ENCODE measurements at regions of chr14 and their contacts with region 1.

Region 1: GRCh38 chr14:75487155-75487671 is 35.1 kb upstream of the BATF start:
- DNase-seq: no peak
- ATAC-seq: no peak
- H3K4me3 ChIP-seq: no peak overlapping the region
- H3K27ac ChIP-seq: no peak overlapping the region
- H3K4me1 ChIP-seq: peaks cover 5 to 12% of the 10 kb centered on the region in 2 experiments; a peak in 3 of 5 replicates
- H3K27me3 ChIP-seq: no peaks in the 10 kb centered on the region
- CTCF ChIP-seq: no peak
- EP300 ChIP-seq: no peak
- POLR2A ChIP-seq: no peak
- RAD21 ChIP-seq: no peak

Region 2: DNA sequence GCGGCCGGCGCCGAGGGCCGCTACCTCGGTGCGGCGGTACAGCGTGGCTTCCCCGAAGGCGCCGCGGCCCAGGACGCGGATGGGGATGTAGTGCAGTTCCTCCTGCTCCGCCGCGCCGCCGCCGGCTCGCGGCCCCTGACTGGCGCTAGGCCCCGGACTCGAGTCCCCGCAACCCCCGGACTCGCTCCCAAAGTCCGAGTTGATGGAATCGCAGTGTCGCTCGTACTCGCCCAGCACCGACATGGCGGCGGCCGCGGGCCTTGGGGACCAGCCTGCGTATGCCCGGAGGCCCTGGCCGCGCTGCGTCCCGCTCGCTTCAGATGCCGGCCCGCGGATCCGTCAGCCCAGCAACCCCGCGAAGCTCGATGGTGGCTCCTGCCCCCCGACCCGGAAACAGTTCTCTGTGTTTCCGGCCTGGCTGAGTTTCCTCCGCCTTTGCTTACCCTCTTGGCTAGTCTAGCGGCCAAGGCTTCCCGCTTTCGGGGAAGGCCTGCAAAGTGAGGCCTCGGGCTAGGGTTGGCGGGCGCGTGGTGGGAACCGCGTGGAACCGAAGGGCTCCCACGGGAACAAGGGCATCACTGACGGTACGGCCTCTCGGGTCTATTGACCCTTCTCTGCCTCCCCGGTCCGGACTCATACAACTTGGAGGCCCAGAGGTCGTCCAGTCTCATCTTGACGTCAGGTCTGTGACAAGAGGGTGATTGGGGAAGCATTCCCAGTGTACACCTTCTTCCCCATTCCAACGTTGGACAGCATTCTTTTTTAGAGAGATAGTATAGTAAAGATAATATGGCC is 360.3 kb before region 1 on chr14 and contains the start of gene NEK9:
- CTCF ChIA-PET with region 1: interaction called, 3 read pairs
- POLR2A ChIA-PET with region 1: no interaction called
- in situ Hi-C with region 1: no loop called
- intact Hi-C with region 1: loop called (anchors 5 kb)
- DNase-seq: peak; percentile 68 to 88 (median 78)
- ATAC-seq: peak; percentile 94
- H3K4me3 ChIP-seq: peak within 1 kb of the TSS; percentile 73
- H3K27ac ChIP-seq: peak within 1 kb of the TSS; percentile 98
- H3K4me1 ChIP-seq: peaks cover 11 to 14% of the 10 kb centered on the region in 2 experiments
- H3K27me3 ChIP-seq: no peaks in the 10 kb centered on the region
- CTCF ChIP-seq: no peak
- EP300 ChIP-seq: no peak
- POLR2A ChIP-seq: peak; percentile 91
- RAD21 ChIP-seq: no peak
- polyA plus RNA-seq, gene NEK9: 2.8 to 5.5 TPM

Region 3: GRCh38 chr14:75147423-75148071 is 339.7 kb before region 1 on chr14:
- CTCF ChIA-PET with region 1: no interaction called
- POLR2A ChIA-PET with region 1: no interaction called
- in situ Hi-C with region 1: loop called (anchors 10 kb)
- intact Hi-C with region 1: no loop called
- DNase-seq: no peak
- ATAC-seq: peak; percentile 57; the same call in 2 of the 3 replicates
- H3K4me3 ChIP-seq: no peak overlapping the region
- H3K27ac ChIP-seq: no peak overlapping the region
- H3K4me1 ChIP-seq: no peaks in the 10 kb centered on the region
- H3K27me3 ChIP-seq: no peaks in the 10 kb centered on the region
- CTCF ChIP-seq: no peak
- EP300 ChIP-seq: no peak
- POLR2A ChIP-seq: no peak
- RAD21 ChIP-seq: 0 out of 4 replicates have a peak, but pooled peaks of 1 of the 2 experiments have one; percentile 11

Region 4: GRCh38 chr14:75560962-75561432 is 73.8 kb after region 1 on chr14:
- CTCF ChIA-PET with region 1: interaction called, 6 read pairs
- POLR2A ChIA-PET with region 1: no interaction called
- in situ Hi-C with region 1: no loop called
- intact Hi-C with region 1: loop called (anchors 1 kb)
- DNase-seq: peak; percentile 62 to 81 (median 74)
- ATAC-seq: peak; percentile 88
- H3K4me3 ChIP-seq: no peak overlapping the region
- H3K27ac ChIP-seq: no peak overlapping the region
- H3K4me1 ChIP-seq: no peaks in the 10 kb centered on the region
- H3K27me3 ChIP-seq: peaks cover 0 to 14% of the 10 kb centered on the region in 2 experiments; a peak in 2 of 5 replicates
- CTCF ChIP-seq: peak; percentile 68 to 82 (median 81)
- EP300 ChIP-seq: no peak
- POLR2A ChIP-seq: no peak
- RAD21 ChIP-seq: peak; percentile 72 to 86

Measured in K562 (cell line).